ENCODE measurements at regions of chr5 and their contacts with region 1.

Region 1: GRCh38 chr5:67165526-67166459 is 30.8 kb downstream of the CD180 start:
- DNase-seq: peak; percentile 90
- H3K4me3 Mint-ChIP-seq: peak overlapping the region; percentile 86
- H3K27ac Mint-ChIP-seq: peak overlapping the region; percentile 98
- H3K4me1 Mint-ChIP-seq: peaks cover 67% of the 10 kb centered on the region
- H3K27me3 Mint-ChIP-seq: no peaks in the 10 kb centered on the region

Region 2: DNA sequence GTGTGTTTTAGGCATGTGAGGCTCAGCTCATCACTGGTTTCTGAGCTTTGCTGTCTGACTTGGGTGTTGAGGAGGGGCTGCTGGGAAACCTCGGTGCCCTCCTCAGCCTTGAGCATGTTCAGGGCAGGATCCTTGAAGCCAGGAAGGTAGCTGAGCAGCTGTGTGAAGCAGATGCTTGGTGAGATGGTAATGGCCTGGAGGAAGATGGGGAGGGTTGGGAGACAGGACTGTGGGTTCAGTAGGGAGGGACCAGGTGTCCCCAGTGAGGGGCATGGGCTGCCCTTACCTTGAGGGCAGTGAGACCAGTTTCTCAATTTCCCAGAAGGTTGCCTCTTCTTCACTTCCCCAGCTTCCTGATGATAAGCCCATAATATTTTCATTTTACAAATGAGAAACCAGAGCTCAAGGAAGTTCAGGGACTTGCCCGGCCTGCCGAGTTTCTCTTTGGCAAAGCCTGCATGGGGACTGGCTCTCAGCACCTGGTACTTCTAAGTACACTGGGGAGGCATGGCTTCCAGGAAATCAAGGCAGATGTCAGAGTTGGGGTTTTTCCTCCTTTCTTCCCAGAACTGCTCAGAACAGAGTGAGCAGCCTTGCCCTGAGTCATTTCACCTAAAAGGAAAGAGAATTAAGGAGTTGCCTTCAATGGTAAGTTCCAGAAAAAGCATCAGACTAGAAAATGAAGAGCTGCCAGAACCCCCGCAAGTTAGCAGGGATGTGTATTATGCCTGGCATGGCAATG is 343.9 kb before region 1 on chr5:
- CTCF ChIA-PET with region 1: interaction called, 3 read pairs
- POLR2A ChIA-PET with region 1: interaction called, 10 read pairs
- DNase-seq: peak; percentile 71
- H3K4me3 Mint-ChIP-seq: peak overlapping the region; percentile 63
- H3K27ac Mint-ChIP-seq: peak overlapping the region; percentile 94
- H3K4me1 Mint-ChIP-seq: peaks cover 56% of the 10 kb centered on the region
- H3K27me3 Mint-ChIP-seq: no peaks in the 10 kb centered on the region

Region 3: GRCh38 chr5:67003935-67004729 is 161.7 kb before region 1 on chr5:
- CTCF ChIA-PET with region 1: interaction called, 3 read pairs
- POLR2A ChIA-PET with region 1: interaction called, 25 read pairs
- DNase-seq: peak; percentile 91
- H3K4me3 Mint-ChIP-seq: peak overlapping the region; percentile 85
- H3K27ac Mint-ChIP-seq: peak overlapping the region; percentile 87
- H3K4me1 Mint-ChIP-seq: peaks cover 50% of the 10 kb centered on the region
- H3K27me3 Mint-ChIP-seq: no peaks in the 10 kb centered on the region

Region 4: GRCh38 chr5:67133776-67134175 is 32.0 kb before region 1 on chr5:
- CTCF ChIA-PET with region 1: no interaction called
- POLR2A ChIA-PET with region 1: no interaction called
- DNase-seq: no peak
- H3K4me3 Mint-ChIP-seq: no peak overlapping the region
- H3K27ac Mint-ChIP-seq: no peak overlapping the region
- H3K4me1 Mint-ChIP-seq: no peaks in the 10 kb centered on the region
- H3K27me3 Mint-ChIP-seq: no peaks in the 10 kb centered on the region

Region 5: GRCh38 chr5:67190856-67191255 is 25.1 kb after region 1 on chr5:
- CTCF ChIA-PET with region 1: interaction called, 9 read pairs
- POLR2A ChIA-PET with region 1: interaction called, 41 read pairs
- DNase-seq: no peak
- H3K4me3 Mint-ChIP-seq: no peak overlapping the region
- H3K27ac Mint-ChIP-seq: no peak overlapping the region
- H3K4me1 Mint-ChIP-seq: peaks cover 35% of the 10 kb centered on the region
- H3K27me3 Mint-ChIP-seq: no peaks in the 10 kb centered on the region

Region 6: GRCh38 chr5:67209142-67209771 is 43.5 kb after region 1 on chr5:
- CTCF ChIA-PET with region 1: interaction called, 519 read pairs
- POLR2A ChIA-PET with region 1: interaction called, 863 read pairs
- DNase-seq: peak; percentile 68
- H3K4me3 Mint-ChIP-seq: no peak overlapping the region
- H3K27ac Mint-ChIP-seq: peak overlapping the region; percentile 66
- H3K4me1 Mint-ChIP-seq: peaks cover 70% of the 10 kb centered on the region
- H3K27me3 Mint-ChIP-seq: no peaks in the 10 kb centered on the region

Region 7: GRCh38 chr5:67221487-67222242 is 55.9 kb after region 1 on chr5:
- CTCF ChIA-PET with region 1: interaction called, 519 read pairs
- POLR2A ChIA-PET with region 1: interaction called, 95 read pairs
- DNase-seq: peak; percentile 82
- H3K4me3 Mint-ChIP-seq: peak overlapping the region; percentile 46
- H3K27ac Mint-ChIP-seq: peak overlapping the region; percentile 95
- H3K4me1 Mint-ChIP-seq: peaks cover 65% of the 10 kb centered on the region
- H3K27me3 Mint-ChIP-seq: no peaks in the 10 kb centered on the region

Region 8: GRCh38 chr5:67301285-67301903 is 135.6 kb after region 1 on chr5:
- CTCF ChIA-PET with region 1: no interaction called
- POLR2A ChIA-PET with region 1: no interaction called
- DNase-seq: no peak
- H3K4me3 Mint-ChIP-seq: no peak overlapping the region
- H3K27ac Mint-ChIP-seq: no peak overlapping the region
- H3K4me1 Mint-ChIP-seq: peaks cover 8% of the 10 kb centered on the region
- H3K27me3 Mint-ChIP-seq: no peaks in the 10 kb centered on the region

Region 9: GRCh38 chr5:67363180-67363709 is 197.5 kb after region 1 on chr5:
- CTCF ChIA-PET with region 1: no interaction called
- POLR2A ChIA-PET with region 1: no interaction called
- DNase-seq: no peak
- H3K4me3 Mint-ChIP-seq: no peak overlapping the region
- H3K27ac Mint-ChIP-seq: no peak overlapping the region
- H3K4me1 Mint-ChIP-seq: peaks cover 7% of the 10 kb centered on the region
- H3K27me3 Mint-ChIP-seq: peaks cover under 1% of the 10 kb centered on the region

Region 10: GRCh38 chr5:68279984-68280383 is 1114.2 kb after region 1 on chr5:
- CTCF ChIA-PET with region 1: no interaction called
- POLR2A ChIA-PET with region 1: interaction called, 13 read pairs
- DNase-seq: peak; percentile 62
- H3K4me3 Mint-ChIP-seq: peak overlapping the region; percentile 84
- H3K27ac Mint-ChIP-seq: peak overlapping the region; percentile 94
- H3K4me1 Mint-ChIP-seq: peaks cover 89% of the 10 kb centered on the region
- H3K27me3 Mint-ChIP-seq: no peaks in the 10 kb centered on the region